CD4-positive, alpha-beta T cell (primary cell): ENCODE measurements at regions of chr20 and their contacts with region 1.

Region 1: GRCh38 chr20:18287915-18288748 is at the start of gene ZNF133:
- DNase-seq: peak; percentile 90 to 99 (median 97)
- ATAC-seq: peak; percentile 91
- H3K4me3 ChIP-seq: peak within 1 kb of the TSS; percentile 90
- H3K4me3 Mint-ChIP-seq: peak within 1 kb of the TSS; percentile 96
- H3K27ac ChIP-seq: peak within 1 kb of the TSS; percentile 95 to 98
- H3K27ac Mint-ChIP-seq: peak within 1 kb of the TSS; percentile 98
- H3K4me1 ChIP-seq: peaks cover 23% of the 10 kb centered on the region
- H3K4me1 Mint-ChIP-seq: peaks cover 49% of the 10 kb centered on the region
- H3K27me3 ChIP-seq: peaks cover 8 to 17% of the 10 kb centered on the region in 2 experiments
- H3K27me3 Mint-ChIP-seq: peaks cover 23% of the 10 kb centered on the region
- CTCF ChIP-seq: no peak
- total RNA-seq, gene ZNF133: 3.3 to 4.1 TPM

Region 2: GRCh38 chr20:16729565-16730456 is 1558.3 kb before region 1 on chr20 and contains the start of gene SNRPB2:
- CTCF ChIA-PET with region 1: no interaction called
- POLR2A ChIA-PET with region 1: interaction called, 5 read pairs
- intact Hi-C with region 1: loop called in 1 of 2 experiments (anchors 2 kb)
- DNase-seq: peak; percentile 85 to 96 (median 88)
- ATAC-seq: peak; percentile 96
- H3K4me3 ChIP-seq: peak within 1 kb of the TSS; percentile 93
- H3K4me3 Mint-ChIP-seq: peak within 1 kb of the TSS; percentile 99
- H3K27ac ChIP-seq: peak within 1 kb of the TSS; percentile 81 to 92
- H3K27ac Mint-ChIP-seq: peak within 1 kb of the TSS; percentile 96
- H3K4me1 ChIP-seq: peaks cover 29% of the 10 kb centered on the region
- H3K4me1 Mint-ChIP-seq: peaks cover 57% of the 10 kb centered on the region
- H3K27me3 ChIP-seq: peaks cover 6 to 16% of the 10 kb centered on the region in 2 experiments
- H3K27me3 Mint-ChIP-seq: peaks cover 26% of the 10 kb centered on the region
- CTCF ChIP-seq: no peak
- total RNA-seq, gene SNRPB2: 49.6 to 50.4 TPM

Region 3: GRCh38 chr20:17569616-17570346 is 718.4 kb before region 1 on chr20 and contains the start of gene DSTN:
- CTCF ChIA-PET with region 1: no interaction called
- POLR2A ChIA-PET with region 1: interaction called, 4 read pairs
- intact Hi-C with region 1: loop called in 1 of 2 experiments (anchors 10 kb)
- DNase-seq: peak; percentile 75 to 95 (median 82)
- ATAC-seq: peak; percentile 87
- H3K4me3 ChIP-seq: peak within 1 kb of the TSS; percentile 85
- H3K4me3 Mint-ChIP-seq: peak within 1 kb of the TSS; percentile 96
- H3K27ac ChIP-seq: peak within 1 kb of the TSS; percentile 53 to 55
- H3K27ac Mint-ChIP-seq: peak within 1 kb of the TSS; percentile 72
- H3K4me1 ChIP-seq: peaks cover 17% of the 10 kb centered on the region
- H3K4me1 Mint-ChIP-seq: peaks cover 34% of the 10 kb centered on the region
- H3K27me3 ChIP-seq: no peaks in the 10 kb centered on the region
- H3K27me3 Mint-ChIP-seq: no peaks in the 10 kb centered on the region
- CTCF ChIP-seq: no peak
- total RNA-seq, gene DSTN: 36.0 to 38.9 TPM

Region 4: DNA sequence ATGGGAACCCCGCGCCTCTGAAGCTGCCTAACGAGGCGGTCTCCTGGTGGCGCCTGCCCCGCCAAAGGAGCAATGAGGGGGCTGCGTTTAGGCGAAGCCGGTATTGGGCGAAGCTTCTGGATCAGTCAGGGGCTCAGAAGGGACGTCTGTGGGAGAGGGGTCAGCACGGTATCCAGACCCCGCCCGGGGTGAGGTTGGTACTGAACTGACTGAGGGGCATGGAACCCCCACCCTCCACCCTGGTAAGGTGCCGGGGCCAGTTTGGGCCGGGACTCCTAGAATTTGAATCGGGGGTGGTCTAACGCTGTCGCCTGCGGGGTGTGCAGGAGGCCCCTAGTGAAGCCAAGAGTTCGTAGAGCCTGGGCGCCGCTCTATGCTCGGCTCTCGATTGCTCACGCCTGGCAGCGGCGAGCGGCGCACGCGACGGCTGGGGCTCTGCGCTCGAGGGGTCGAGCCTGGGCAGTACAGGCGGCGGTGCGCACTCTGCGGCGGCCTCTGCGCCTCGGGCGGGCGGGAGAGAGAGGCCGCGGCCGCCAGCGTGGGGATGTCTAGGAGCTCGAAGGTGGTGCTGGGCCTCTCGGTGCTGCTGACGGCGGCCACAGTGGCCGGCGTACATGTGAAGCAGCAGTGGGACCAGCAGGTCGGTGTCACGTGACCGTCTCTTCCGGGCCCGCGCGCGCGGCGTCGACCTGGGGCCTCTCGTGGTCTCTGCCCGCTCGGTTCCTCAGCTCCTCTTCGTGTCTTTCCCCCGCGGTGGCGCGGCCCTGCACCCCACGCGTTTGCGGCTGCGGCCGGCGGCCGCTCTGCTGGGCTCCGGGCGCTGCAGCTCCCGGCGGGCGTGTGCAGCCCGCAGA is 150.5 kb before region 1 on chr20 and contains the starts of genes KAT14 and PET117:
- CTCF ChIA-PET with region 1: interaction called, 3 read pairs
- POLR2A ChIA-PET with region 1: interaction called, 47 read pairs
- intact Hi-C with region 1: loop called (anchors 1 to 2 kb)
- DNase-seq: peak; percentile 83 to 96 (median 91)
- ATAC-seq: peak; percentile 92
- H3K4me3 ChIP-seq: peak within 1 kb of the TSS; percentile 81
- H3K4me3 Mint-ChIP-seq: peak within 1 kb of the TSS; percentile 96
- H3K27ac ChIP-seq: peak within 1 kb of the TSS; percentile 72 to 75
- H3K27ac Mint-ChIP-seq: peak within 1 kb of the TSS; percentile 95
- H3K4me1 ChIP-seq: peaks cover 32% of the 10 kb centered on the region
- H3K4me1 Mint-ChIP-seq: peaks cover 32% of the 10 kb centered on the region
- H3K27me3 ChIP-seq: no peaks in the 10 kb centered on the region
- H3K27me3 Mint-ChIP-seq: no peaks in the 10 kb centered on the region
- CTCF ChIP-seq: no peak
- total RNA-seq, gene KAT14: 8.5 to 9.4 TPM
- total RNA-seq, gene PET117: 13.6 to 14.6 TPM

Region 5: GRCh38 chr20:18507218-18508021 is 219.3 kb after region 1 on chr20 and contains the start of gene SEC23B:
- CTCF ChIA-PET with region 1: no interaction called
- POLR2A ChIA-PET with region 1: interaction called, 52 read pairs
- intact Hi-C with region 1: loop called (anchors 1 to 2 kb)
- DNase-seq: peak; percentile 94 to 99 (median 98)
- ATAC-seq: peak; percentile 81
- H3K4me3 ChIP-seq: peak within 1 kb of the TSS; percentile 86
- H3K4me3 Mint-ChIP-seq: peak within 1 kb of the TSS; percentile 98
- H3K27ac ChIP-seq: peak within 1 kb of the TSS; percentile 94 to 99
- H3K27ac Mint-ChIP-seq: peak within 1 kb of the TSS; percentile 100
- H3K4me1 ChIP-seq: peaks cover 26% of the 10 kb centered on the region
- H3K4me1 Mint-ChIP-seq: peaks cover 52% of the 10 kb centered on the region
- H3K27me3 ChIP-seq: peaks cover 0 to 2% of the 10 kb centered on the region in 2 experiments
- H3K27me3 Mint-ChIP-seq: no peaks in the 10 kb centered on the region
- CTCF ChIP-seq: no peak
- total RNA-seq, gene SEC23B: 29.2 to 32.8 TPM

Region 6: DNA sequence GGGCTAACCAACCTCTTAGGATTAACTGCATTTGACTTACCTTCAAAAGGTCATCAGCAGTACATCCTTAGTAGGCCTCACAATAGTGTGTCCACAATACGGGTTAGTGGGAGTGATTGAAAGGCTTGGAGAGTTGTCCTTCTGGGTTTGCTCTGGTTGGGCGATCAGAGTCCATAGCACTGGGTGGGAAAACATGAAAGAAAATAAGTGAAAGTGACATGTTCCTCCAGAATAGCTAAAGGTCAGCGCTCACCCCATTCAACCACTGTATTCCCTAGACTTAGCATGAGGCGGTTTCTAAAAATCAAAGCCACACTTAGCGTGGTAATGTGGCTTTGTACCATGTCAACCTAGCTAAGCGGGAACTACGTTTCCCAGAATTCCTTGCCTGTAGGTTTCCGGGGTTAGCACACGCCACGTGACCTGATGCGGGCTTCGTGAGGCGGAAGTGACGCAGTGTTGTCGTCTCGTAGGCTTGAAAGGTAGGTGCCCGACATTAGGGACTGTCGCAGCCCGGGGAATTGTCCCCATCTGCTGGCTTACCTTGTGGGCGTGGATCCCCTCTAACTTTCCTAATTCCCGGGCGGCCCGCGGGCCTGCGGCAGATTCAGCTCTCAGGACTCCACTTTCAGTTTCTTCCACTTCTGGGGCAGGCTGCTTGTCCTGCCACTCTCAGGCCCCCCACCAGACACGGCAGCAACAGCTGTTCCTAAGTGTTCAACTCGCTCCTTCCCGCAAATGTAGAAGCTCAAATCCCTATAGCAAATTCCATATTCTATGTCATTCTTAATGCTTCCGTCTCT is 505.7 kb after region 1 on chr20:
- CTCF ChIA-PET with region 1: no interaction called
- POLR2A ChIA-PET with region 1: interaction called, 21 read pairs
- intact Hi-C with region 1: loop called in 1 of 2 experiments (anchors 2 kb)
- DNase-seq: peak; percentile 75 to 98 (median 82)
- ATAC-seq: peak; percentile 96
- H3K4me3 ChIP-seq: peak overlapping the region; percentile 75
- H3K4me3 Mint-ChIP-seq: peak overlapping the region; percentile 92
- H3K27ac ChIP-seq: peak overlapping the region; percentile 85 to 93
- H3K27ac Mint-ChIP-seq: peak overlapping the region; percentile 100
- H3K4me1 ChIP-seq: peaks cover 11% of the 10 kb centered on the region
- H3K4me1 Mint-ChIP-seq: peaks cover 28% of the 10 kb centered on the region
- H3K27me3 ChIP-seq: peaks cover 0 to 13% of the 10 kb centered on the region in 2 experiments
- H3K27me3 Mint-ChIP-seq: peaks cover 40% of the 10 kb centered on the region
- CTCF ChIP-seq: no peak

Region 7: DNA sequence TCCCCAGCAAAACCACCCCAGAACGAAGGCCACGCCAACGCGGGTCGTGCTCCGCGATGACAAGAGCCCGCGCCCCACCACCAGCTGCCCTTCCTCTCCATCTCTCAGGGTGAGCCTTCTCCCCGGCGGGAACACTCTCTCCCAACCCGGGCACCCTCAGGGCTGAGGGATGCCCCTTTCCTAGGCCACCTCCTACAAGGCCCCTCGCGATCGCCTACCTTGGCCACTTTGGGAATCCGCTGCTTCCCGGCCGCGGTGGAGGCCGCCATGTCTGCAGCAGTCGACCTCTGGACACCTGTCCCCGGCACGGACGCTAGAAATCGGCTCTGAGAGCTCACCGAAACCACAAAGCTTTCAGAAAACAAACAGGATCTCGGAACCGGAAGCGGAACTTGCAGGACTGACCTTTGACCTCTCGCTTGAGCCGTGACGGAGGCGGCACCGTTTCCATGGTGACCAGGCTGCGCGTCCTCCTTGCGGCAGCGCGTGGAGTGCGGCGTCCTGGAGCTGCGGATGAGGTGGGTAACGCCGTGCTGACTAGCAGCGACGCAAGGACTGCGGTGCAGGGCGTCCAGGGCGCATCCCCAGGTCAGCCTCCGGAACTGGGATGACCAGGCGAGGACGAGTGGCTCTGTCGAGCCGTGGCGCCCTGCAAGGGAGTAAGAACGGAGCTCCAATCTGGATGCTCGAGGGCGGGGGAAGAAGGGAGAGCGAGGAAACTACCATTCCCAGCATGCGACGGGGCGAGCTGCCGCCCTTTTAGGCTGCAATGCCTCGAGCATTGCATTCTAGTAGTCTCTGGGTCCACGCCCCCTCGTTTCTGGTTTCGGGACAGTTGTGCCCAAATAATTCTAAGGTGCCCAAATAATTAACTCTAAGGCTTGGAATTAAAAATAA is 1764.2 kb after region 1 on chr20 and contains the starts of genes CFAP61 and CRNKL1:
- CTCF ChIA-PET with region 1: no interaction called
- POLR2A ChIA-PET with region 1: interaction called, 5 read pairs
- intact Hi-C with region 1: loop called in 1 of 2 experiments (anchors 10 kb)
- DNase-seq: peak; percentile 94 to 100 (median 97)
- ATAC-seq: peak; percentile 93
- H3K4me3 ChIP-seq: peak within 1 kb of the TSS; percentile 91
- H3K4me3 Mint-ChIP-seq: peak within 1 kb of the TSS; percentile 98
- H3K27ac ChIP-seq: peak within 1 kb of the TSS; percentile 80 to 91
- H3K27ac Mint-ChIP-seq: peak within 1 kb of the TSS; percentile 89
- H3K4me1 ChIP-seq: peaks cover 7% of the 10 kb centered on the region
- H3K4me1 Mint-ChIP-seq: peaks cover 37% of the 10 kb centered on the region
- H3K27me3 ChIP-seq: no peaks in the 10 kb centered on the region
- H3K27me3 Mint-ChIP-seq: peaks cover 6% of the 10 kb centered on the region
- CTCF ChIP-seq: no peak
- total RNA-seq, gene CFAP61: not detected
- total RNA-seq, gene CRNKL1: 24.3 to 26.1 TPM